Heart left ventricle (tissue), 16 donors: ENCODE measurements at regions of chr1 and their contacts with region 1.

Region 1: DNA sequence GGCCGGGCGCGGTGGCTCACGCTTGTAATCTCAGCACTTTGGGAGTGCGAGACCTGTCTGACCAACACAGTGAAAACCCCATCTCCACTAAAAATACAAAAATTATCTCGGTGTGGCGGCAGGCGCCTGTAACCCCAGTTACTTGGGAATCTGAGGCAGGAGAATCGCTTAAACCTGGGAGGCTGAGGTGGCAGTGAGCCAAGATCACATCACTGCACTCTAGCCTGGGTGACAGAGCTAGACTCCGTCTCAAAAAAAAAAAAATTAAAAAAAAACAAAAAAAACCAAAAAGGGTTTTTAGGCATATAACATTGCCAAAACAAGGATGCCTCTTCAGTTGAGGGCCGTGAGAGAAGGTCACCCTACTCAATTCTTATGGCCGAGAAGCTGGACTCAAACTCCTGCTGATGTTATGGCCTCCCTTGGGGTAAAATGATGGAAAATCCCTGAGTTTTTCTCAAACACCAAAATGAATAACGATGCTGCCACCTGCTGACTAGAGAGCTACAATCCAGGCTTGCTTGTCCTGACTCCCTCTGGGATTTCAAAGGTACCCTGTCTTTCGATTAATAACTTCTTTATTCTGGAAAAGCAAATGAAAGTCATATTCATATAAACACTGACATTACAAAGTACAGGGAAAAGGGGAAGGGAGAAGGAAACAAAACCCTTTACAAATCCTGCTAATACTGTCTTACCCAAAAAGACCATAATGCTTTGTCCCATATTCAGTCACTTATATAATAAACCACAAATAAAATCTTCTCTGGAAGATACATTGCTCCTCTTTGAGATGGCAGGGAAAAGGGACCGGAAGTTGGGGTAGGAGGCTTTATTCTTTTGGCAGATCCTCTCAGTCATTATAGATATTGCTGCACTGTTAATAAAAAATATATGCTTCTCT is 10.7 kb downstream of the RAB42 start:
- DNase-seq: peak in 4 of 5 donors; percentile 40 to 70 (median 52)
- ATAC-seq: peak in 2 of 4 donors; percentile 77 to 84
- H3K4me3 ChIP-seq: no peak overlapping the region
- H3K27ac ChIP-seq: peak overlapping the region in 3 of 12 donors; percentile 9 to 23 (median 20)
- H3K4me1 ChIP-seq: peaks cover 0 to 14% (median 0%) of the 10 kb centered on the region in 12 donors
- H3K27me3 ChIP-seq: no peaks in the 10 kb centered on the region
- CTCF ChIP-seq: peak; percentile 44 to 80 (median 62)
- POLR2A ChIP-seq: no peak

Region 2: DNA sequence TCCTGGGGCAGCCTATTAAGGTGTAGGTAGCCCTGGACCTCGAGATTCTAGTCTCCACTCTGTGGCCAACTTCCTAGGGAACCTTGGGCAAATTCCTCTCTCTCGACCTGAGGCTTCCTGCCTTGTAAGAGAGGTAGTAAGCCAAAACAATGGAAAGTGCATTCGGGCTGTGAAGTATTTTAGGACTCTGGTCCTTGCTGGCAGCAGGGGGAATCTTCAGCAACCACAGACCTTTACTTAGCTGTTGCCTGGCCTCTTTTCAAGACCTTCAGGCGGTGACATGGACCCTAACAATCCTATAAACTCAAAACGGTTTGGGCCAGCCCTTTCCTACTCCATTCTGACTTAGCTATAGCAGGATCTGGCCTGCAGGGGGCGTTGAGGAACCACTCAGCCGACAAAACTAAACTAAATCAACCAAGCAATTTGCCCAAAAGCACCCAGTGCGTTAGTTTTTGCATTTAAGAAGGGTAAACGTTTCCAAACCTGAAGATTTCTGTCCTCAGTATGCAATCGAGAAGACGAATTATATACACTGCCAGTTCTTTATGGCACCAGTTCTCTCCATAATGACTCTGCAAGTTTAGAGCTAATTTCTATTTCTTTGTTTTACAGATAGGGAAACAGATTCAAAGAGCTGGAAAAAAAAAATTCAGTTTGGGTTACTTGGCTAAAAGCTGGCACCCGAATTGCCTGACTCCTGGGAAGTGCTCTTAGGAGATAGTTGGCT is 354.3 kb before region 1 on chr1:
- intact Hi-C with region 1: loop called in 2 of 10 experiments (anchors 2 to 10 kb)
- DNase-seq: peak; percentile 73 to 86 (median 82)
- ATAC-seq: peak; percentile 37 to 53 (median 48)
- H3K4me3 ChIP-seq: peak overlapping the region in 9 of 12 donors; percentile 11 to 33 (median 20)
- H3K27ac ChIP-seq: peak overlapping the region; percentile 37 to 97 (median 86)
- H3K4me1 ChIP-seq: peaks cover 0 to 74% (median 26%) of the 10 kb centered on the region in 12 donors
- H3K27me3 ChIP-seq: no peaks in the 10 kb centered on the region
- CTCF ChIP-seq: peak; percentile 88 to 98 (median 94)
- POLR2A ChIP-seq: no peak

Region 3: GRCh38 chr1:28259307-28260167 is 343.3 kb before region 1 on chr1 and contains the start of gene SESN2:
- intact Hi-C with region 1: loop called in 1 of 10 experiments (anchors 10 kb)
- DNase-seq: peak; percentile 99 to 100 (median 100)
- ATAC-seq: peak; percentile 98 to 99 (median 98)
- H3K4me3 ChIP-seq: peak within 1 kb of the TSS; percentile 58 to 99 (median 96)
- H3K27ac ChIP-seq: peak within 1 kb of the TSS in 11 of 12 donors; percentile 78 to 98 (median 87)
- H3K4me1 ChIP-seq: peaks cover 0 to 41% (median 22%) of the 10 kb centered on the region in 12 donors
- H3K27me3 ChIP-seq: peaks cover 0 to 2% (median 0%) of the 10 kb centered on the region in 9 donors
- CTCF ChIP-seq: no peak
- POLR2A ChIP-seq: peak; percentile 97 to 99
- total RNA-seq, gene SESN2: 2.4 to 6.4 (median 4.7) TPM

Region 4: DNA sequence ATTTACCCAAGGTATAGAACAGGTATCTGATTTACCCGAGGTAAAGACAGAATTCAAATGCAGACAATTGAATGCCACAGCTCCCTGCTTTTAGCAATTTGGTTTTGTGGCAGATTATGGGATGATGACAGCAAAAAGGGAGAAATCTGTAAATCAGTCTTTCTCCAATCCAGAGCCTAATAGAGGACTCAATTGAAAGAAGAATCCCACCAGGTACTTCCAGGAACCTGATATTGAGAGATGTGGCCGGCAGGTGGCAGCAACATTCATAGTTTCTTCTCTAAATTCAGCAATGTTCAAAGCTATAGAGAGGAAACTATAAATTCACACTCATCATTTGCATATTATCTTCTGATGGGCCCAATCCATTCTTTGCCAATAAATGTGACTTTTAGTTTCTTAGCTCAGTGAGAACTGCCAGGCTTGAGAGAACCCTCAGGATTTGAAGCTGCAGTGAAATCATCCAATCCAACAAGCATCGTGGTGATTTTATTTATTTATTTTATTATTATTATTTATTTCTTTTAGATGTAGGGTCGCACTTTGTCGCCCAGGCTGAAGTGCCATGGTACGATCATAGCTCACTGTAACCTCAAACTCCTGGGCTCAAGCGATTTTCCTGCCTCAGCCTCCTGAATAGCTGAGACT is 243.1 kb before region 1 on chr1:
- intact Hi-C with region 1: loop called in 8 of 10 experiments (anchors 2 to 10 kb)
- DNase-seq: peak; percentile 43 to 74 (median 64)
- ATAC-seq: peak in 2 of 4 donors; percentile 45 to 59
- H3K4me3 ChIP-seq: no peak overlapping the region
- H3K27ac ChIP-seq: no peak overlapping the region
- H3K4me1 ChIP-seq: peaks cover 0 to 2% (median 0%) of the 10 kb centered on the region in 12 donors
- H3K27me3 ChIP-seq: no peaks in the 10 kb centered on the region
- CTCF ChIP-seq: peak; percentile 52 to 78 (median 62)
- POLR2A ChIP-seq: no peak

Region 5: GRCh38 chr1:28409090-28409489 is 193.7 kb before region 1 on chr1:
- intact Hi-C with region 1: loop called in 2 of 10 experiments (anchors 10 kb)
- DNase-seq: no peak
- ATAC-seq: no peak
- H3K4me3 ChIP-seq: no peak overlapping the region
- H3K27ac ChIP-seq: no peak overlapping the region
- H3K4me1 ChIP-seq: peaks cover 0 to 13% (median 0%) of the 10 kb centered on the region in 12 donors
- H3K27me3 ChIP-seq: no peaks in the 10 kb centered on the region
- CTCF ChIP-seq: no peak
- POLR2A ChIP-seq: no peak

Region 6: GRCh38 chr1:28518000-28518744 is 84.6 kb before region 1 on chr1:
- intact Hi-C with region 1: loop called (anchors 1 to 5 kb)
- DNase-seq: peak; percentile 89 to 95 (median 91)
- ATAC-seq: peak; percentile 80 to 95 (median 92)
- H3K4me3 ChIP-seq: peak overlapping the region; percentile 38 to 91 (median 74)
- H3K27ac ChIP-seq: peak overlapping the region in 11 of 12 donors; percentile 71 to 88 (median 82)
- H3K4me1 ChIP-seq: peaks cover 4 to 18% (median 10%) of the 10 kb centered on the region in 12 donors
- H3K27me3 ChIP-seq: no peaks in the 10 kb centered on the region
- CTCF ChIP-seq: peak; percentile 96 to 100 (median 98)
- POLR2A ChIP-seq: peak in 1 of 2 donors; percentile 66